Heart right ventricle (tissue), 16 donors: ENCODE measurements at regions of chr6 and their contacts with region 1.

Region 1: DNA sequence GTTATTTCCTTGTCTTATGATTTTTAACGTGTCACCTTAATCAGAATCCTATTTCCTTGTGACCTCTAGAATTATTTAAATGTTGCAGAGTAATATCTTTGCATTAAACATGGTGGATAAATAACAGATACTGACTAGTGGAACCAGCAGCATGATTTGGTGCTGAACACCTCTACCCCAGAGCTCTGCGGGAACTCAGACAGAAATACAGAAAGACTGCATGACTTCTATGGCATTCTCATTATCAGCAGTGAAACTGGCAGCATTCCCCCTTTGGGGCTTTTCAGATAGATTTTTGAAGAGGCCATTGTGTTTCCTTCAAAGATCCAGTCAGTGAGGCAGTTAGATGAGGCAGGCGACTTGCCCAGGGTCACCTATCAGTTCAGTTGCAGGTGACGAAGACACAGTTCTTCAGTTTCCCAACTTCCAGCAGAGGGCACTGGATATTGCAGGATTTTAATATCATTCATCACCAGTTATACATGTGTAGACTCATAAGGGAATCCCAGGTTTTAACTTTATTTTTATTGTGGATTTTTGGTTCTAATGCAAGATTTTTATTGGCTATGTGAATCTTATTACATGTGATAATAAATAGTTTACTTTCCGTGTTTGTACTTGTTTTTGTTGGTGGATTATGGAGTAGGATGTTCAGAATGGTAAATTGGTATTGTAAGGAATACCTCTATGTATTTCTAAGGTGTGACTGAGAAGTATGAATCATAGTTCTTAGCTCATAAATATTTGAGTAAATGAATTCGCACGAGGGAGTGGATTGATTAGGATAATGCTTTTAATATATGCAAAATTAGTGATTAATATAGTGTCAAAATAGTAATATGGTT is 81.3 kb downstream of the AFDN start:
- DNase-seq: peak in 1 of 2 donors; percentile 27
- ATAC-seq: peak in 5 of 8 donors; percentile 55 to 85 (median 75)
- H3K4me3 ChIP-seq: no peak overlapping the region
- H3K27ac ChIP-seq: no peak overlapping the region
- H3K4me1 ChIP-seq: peaks cover 0 to 23% (median 14%) of the 10 kb centered on the region in 9 donors
- H3K27me3 ChIP-seq: no peaks in the 10 kb centered on the region
- CTCF ChIP-seq: peak in 8 of 9 donors; percentile 33 to 81 (median 67)

Region 2: GRCh38 chr6:168117942-168118341 is 209.9 kb after region 1 on chr6:
- intact Hi-C with region 1: loop called in 5 of 10 experiments (anchors 2 to 10 kb)
- DNase-seq: no peak
- ATAC-seq: no peak
- H3K4me3 ChIP-seq: no peak overlapping the region
- H3K27ac ChIP-seq: no peak overlapping the region
- H3K4me1 ChIP-seq: peaks cover 0 to 5% (median 0%) of the 10 kb centered on the region in 9 donors
- H3K27me3 ChIP-seq: no peaks in the 10 kb centered on the region
- CTCF ChIP-seq: peak; percentile 42 to 71 (median 66)

Region 3: DNA sequence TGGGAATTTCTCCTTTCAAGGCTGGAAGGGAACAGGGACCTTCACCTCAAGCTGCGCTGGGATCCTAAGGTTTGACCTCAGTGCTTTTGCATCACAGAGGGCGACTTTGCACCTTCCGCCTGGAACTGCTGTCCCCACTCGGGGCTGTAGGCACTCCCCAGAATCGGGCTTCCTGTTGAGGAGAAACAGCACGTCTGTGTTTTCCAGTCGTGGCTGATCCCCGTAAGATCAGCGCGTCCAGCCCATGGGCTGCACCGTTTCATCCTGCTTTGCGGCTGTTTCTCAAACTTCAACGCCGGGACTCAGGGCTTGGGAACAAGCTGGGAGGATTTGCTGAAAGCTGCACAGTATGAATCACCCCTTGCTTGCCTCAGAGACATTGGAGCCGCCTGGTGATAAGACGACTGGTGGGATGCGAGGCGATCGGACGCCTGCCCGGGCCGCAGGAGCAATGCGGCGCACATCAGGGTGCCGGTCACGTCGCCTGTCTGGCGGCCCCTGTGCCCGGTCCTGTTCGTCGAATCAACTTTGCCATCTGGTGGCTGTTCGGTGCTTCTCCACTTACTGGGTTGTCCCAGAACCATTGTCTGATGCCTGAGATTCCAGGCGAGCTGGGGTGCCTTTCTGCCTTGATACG is 224.6 kb after region 1 on chr6:
- intact Hi-C with region 1: loop called (anchors 2 to 10 kb)
- DNase-seq: peak; percentile 64 to 75
- ATAC-seq: peak; percentile 71 to 91 (median 84)
- H3K4me3 ChIP-seq: peak overlapping the region in 9 of 10 donors; percentile 1 to 45 (median 39)
- H3K27ac ChIP-seq: peak overlapping the region in 8 of 10 donors; percentile 8 to 80 (median 36)
- H3K4me1 ChIP-seq: peaks cover 2 to 29% (median 19%) of the 10 kb centered on the region in 9 donors
- H3K27me3 ChIP-seq: no peaks in the 10 kb centered on the region
- CTCF ChIP-seq: peak; percentile 36 to 83 (median 65)